ENCODE measurements at regions of chr16 and their contacts with region 1.

Region 1: GRCh38 chr16:79372503-79373184 is 227.9 kb downstream of the MAF start:
- DNase-seq: peak in 1 of 2 donors; percentile 23
- ATAC-seq: peak; percentile 25 to 70 (median 42)
- H3K4me3 ChIP-seq: no peak overlapping the region
- H3K27ac ChIP-seq: no peak overlapping the region
- H3K4me1 ChIP-seq: peaks cover 14% of the 10 kb centered on the region
- H3K27me3 ChIP-seq: no peaks in the 10 kb centered on the region
- CTCF ChIP-seq: no peak

Region 2: DNA sequence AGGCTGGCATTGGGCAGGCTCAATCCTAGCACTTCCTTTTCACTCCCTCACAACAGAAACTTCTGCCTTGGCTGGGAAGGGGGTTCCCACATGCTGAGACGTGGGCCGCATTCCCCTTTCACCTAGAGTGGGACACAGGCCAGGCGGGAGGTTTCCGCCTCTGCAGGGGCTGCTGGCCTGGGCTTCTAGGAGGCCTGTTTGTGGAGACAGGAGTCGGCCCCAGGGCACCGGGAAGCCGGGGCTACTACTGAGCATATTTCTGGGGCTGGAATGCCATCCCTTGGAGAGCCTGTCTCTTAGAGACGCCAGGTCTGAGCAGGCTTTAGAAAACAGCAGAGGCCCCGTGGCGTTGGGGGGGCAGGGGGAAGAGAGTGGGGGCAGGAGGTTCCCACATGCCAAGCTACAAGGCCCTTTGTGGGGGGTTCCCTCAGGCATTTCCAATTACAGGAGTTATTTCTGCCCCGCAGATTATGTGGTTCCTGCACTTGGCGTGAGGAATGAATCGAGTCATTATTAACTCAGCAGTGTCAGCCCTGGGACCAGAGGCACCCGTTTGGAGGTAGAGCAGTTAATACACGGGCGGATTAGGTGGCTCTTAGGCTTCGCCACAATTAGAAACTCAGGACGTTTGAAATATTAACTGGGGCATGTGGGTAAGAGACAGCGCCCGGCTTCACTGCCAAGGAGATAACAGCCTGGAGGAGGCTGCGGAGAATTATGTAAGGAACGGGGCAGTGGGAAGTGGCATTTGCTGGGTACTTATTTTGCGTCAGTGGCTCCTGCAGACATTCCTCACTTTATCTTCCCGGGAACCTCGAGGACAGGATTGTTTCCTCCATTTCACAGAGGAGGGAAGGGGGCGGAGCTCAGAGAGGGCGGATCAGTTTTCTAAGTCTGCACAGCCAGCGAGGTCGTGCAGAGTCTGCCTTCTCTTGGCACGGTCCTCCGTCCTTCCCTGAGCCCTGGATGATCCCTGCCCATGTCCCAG is 65.4 kb after region 1 on chr16:
- intact Hi-C with region 1: loop called (anchors 5 kb)
- DNase-seq: peak; percentile 59 to 76
- ATAC-seq: peak; percentile 85 to 94 (median 89)
- H3K4me3 ChIP-seq: peak overlapping the region; percentile 44
- H3K27ac ChIP-seq: peak overlapping the region; percentile 79
- H3K4me1 ChIP-seq: peaks cover 23% of the 10 kb centered on the region
- H3K27me3 ChIP-seq: no peaks in the 10 kb centered on the region
- CTCF ChIP-seq: no peak